Mammary epithelial cell (primary cell): ENCODE measurements at regions of chr1 and their contacts with region 1.

Region 1: DNA sequence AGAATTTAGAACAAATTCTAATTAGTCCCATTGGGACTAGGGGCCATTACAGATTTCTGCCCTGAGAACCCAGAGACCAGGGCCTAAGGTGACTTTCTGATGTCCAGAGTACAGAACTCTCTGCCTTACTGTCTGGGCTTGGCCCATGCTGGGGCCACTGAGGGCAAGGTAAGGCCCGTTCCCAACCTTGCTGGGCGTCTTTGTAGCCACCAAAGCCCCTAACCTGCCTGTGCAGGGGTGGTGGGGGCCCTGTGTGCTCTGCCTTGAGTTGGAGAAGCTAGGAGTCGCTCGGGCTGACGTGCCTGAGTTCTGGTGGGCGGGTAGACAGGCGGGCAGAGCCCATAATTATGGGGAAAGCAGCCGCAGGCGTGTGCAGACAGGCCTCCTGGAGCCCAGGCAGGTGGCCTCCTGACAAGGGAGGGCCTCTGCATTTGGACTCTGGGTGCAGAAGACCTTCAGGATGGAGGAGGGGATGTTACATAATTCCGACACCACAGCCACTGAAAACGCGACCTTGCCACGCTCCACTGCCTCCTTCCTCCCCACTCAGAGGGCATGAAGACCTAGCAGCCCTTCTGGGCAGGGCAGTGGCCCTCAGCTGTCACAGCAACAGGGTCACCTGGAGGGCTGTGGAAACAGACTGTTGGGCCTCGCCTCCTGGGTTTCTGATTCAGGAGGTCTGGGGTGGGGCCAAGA is 239.9 kb upstream of the TMEM51 start:
- DNase-seq: peak; percentile 85
- H3K4me3 ChIP-seq: no peak overlapping the region
- H3K27ac ChIP-seq: peak overlapping the region; percentile 77
- H3K4me1 ChIP-seq: peaks cover 40% of the 10 kb centered on the region
- H3K27me3 ChIP-seq: no peaks in the 10 kb centered on the region
- CTCF ChIP-seq: no peak

Region 2: GRCh38 chr1:14138134-14139086 is 775.2 kb before region 1 on chr1:
- CTCF ChIA-PET with region 1: no interaction called
- dilution Hi-C with region 1: no loop called
- in situ Hi-C with region 1: no loop called
- intact Hi-C with region 1: loop called (anchors 5 kb)
- DNase-seq: peak; percentile 99
- H3K4me3 ChIP-seq: no peak overlapping the region
- H3K27ac ChIP-seq: peak overlapping the region; percentile 90
- H3K4me1 ChIP-seq: peaks cover 30% of the 10 kb centered on the region
- H3K27me3 ChIP-seq: no peaks in the 10 kb centered on the region
- CTCF ChIP-seq: peak in 1 of 2 donors; percentile 7

Region 3: GRCh38 chr1:14567056-14567455 is 346.6 kb before region 1 on chr1:
- CTCF ChIA-PET with region 1: no interaction called
- dilution Hi-C with region 1: no loop called
- in situ Hi-C with region 1: no loop called
- intact Hi-C with region 1: loop called (anchors 5 kb)
- DNase-seq: peak; percentile 12
- H3K4me3 ChIP-seq: no peak overlapping the region
- H3K27ac ChIP-seq: no peak overlapping the region
- H3K4me1 ChIP-seq: no peaks in the 10 kb centered on the region
- H3K27me3 ChIP-seq: no peaks in the 10 kb centered on the region
- CTCF ChIP-seq: peak; percentile 25 to 45

Region 4: GRCh38 chr1:14826172-14826636 is 87.4 kb before region 1 on chr1:
- CTCF ChIA-PET with region 1: no interaction called
- dilution Hi-C with region 1: loop called (anchors 5 kb)
- in situ Hi-C with region 1: no loop called
- intact Hi-C with region 1: no loop called
- DNase-seq: no peak
- H3K4me3 ChIP-seq: no peak overlapping the region
- H3K27ac ChIP-seq: no peak overlapping the region
- H3K4me1 ChIP-seq: no peaks in the 10 kb centered on the region
- H3K27me3 ChIP-seq: no peaks in the 10 kb centered on the region
- CTCF ChIP-seq: no peak